H1 (cell line): ENCODE measurements at regions of chr4 and their contacts with region 1.

Region 1: DNA sequence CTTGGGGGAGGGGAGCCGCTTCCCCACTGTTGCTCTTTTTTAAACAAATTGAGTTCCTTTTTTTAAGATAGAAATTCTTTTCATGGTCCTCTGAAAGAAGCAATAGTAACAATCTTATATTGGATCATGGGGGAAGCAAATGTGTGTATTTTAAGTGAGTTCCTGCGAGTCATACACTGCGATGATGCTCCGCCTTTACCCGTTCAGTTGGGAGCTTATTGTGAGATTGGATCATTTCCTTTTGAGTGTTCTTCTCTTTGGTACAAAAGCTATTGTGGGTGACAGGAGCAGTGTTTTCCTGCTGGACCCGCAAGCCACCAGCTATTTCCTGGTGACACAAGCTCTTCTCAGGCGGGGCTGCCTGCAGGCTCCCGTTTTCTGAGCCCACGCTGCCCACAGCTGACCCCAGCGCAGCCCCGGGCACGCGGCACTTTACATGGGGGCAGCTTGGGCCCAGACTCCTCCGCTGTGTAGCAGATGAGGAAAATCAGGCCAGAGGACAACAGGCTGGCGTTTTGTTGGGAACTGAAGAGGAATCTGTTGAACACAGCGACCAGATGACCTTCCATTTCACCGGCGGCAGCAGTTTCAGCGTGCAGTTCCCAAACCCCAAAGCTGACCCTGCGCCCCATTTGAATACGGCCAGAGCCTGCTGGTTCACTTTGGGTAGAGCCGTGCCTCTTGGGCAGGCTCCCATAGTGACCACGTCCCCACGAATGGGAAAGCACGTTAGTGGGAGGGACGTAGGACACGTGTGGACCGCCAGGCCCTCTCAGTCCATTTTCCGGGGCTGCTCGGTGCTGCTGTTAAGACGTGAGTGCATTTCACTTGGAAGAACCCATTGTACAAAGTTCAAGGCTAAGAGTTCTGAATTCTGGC is 12.2 kb downstream of the TADA2B start:
- DNase-seq: no peak
- H3K4me3 ChIP-seq: no peak overlapping the region
- H3K27ac ChIP-seq: no peak overlapping the region
- H3K4me1 ChIP-seq: no peaks in the 10 kb centered on the region; a peak in 1 of 7 replicates
- H3K27me3 ChIP-seq: no peaks in the 10 kb centered on the region
- CTCF ChIP-seq: no peak
- EP300 ChIP-seq: no peak
- POLR2A ChIP-seq: no peak
- RAD21 ChIP-seq: no peak

Region 2: GRCh38 chr4:7042697-7043464 is 12.5 kb before region 1 on chr4 and contains the start of gene TADA2B:
- CTCF ChIA-PET with region 1: interaction called, 10 read pairs
- POLR2A ChIA-PET with region 1: interaction called, 36 read pairs
- DNase-seq: peak; percentile 92 to 96
- H3K4me3 ChIP-seq: peak within 1 kb of the TSS; percentile 74 to 92 (median 89)
- H3K27ac ChIP-seq: peak within 1 kb of the TSS; percentile 23; the same call in 1 of the 2 replicates
- H3K4me1 ChIP-seq: peaks cover 0 to 15% (median 8%) of the 10 kb centered on the region in 4 experiments; a peak in 5 of 7 replicates
- H3K27me3 ChIP-seq: peaks cover 11 to 29% (median 20%) of the 10 kb centered on the region in 4 experiments
- CTCF ChIP-seq: peak in 2 of 3 experiments; percentile 37 to 56; a peak in 3 of 4 replicates
- EP300 ChIP-seq: no peak
- POLR2A ChIP-seq: no peak
- RAD21 ChIP-seq: no peak
- total RNA-seq, gene TADA2B: 12.1 and 12.3 TPM in 2 replicates